B cell (primary cell): ENCODE measurements at regions of chr17 and their contacts with region 1.

Region 1: GRCh38 chr17:8138672-8139371 is 13.4 kb downstream of the PER1 start:
- DNase-seq: peak; percentile 98
- ATAC-seq: peak; percentile 96
- H3K4me3 ChIP-seq: peak overlapping the region; percentile 62 to 84 (median 72)
- H3K4me3 Mint-ChIP-seq: no peak overlapping the region
- H3K27ac ChIP-seq: peak overlapping the region; percentile 84 to 98
- H3K27ac Mint-ChIP-seq: no peak overlapping the region
- H3K4me1 ChIP-seq: peaks cover 10 to 20% of the 10 kb centered on the region in 2 donors
- H3K4me1 Mint-ChIP-seq: peaks cover 2% of the 10 kb centered on the region
- H3K27me3 ChIP-seq: no peaks in the 10 kb centered on the region
- H3K27me3 Mint-ChIP-seq: no peaks in the 10 kb centered on the region
- CTCF ChIP-seq: peak; percentile 94

Region 2: DNA sequence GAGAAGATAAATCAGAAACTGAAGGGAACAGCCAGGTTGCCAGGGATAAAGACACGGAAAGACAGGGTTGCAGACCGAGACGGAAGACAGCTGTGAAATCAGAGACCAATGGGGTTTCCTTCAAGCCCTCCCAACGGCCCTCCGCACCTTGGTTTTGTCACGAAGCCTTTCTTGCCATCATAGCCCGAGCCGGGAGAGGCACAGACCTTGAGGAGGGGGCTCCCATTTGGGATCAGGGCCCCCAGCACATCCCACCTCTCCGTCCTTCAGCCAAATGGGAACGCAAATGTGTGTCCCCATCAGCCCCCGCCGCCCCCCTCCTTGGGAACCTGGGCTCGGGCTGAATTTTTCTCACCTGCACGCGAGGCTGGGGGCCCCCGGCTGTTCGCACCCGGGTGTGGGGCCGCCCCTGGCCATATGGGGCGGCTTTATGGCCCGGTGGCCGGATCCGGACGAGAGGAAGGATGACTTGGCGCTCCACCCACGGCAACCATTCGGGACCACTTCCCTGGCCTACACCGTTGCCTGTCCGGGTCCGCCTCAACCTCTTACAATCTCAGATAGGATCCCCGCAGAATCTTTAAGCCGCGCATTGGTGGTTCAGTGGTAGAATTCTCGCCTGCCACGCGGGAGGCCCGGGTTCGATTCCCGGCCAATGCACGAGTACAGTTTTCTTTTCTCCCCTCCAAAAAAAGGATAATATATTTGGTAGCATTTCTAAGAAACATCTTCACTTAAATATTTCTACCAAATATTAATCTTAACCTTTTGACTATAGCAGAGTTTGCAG is 13.5 kb before region 1 on chr17:
- CTCF ChIA-PET with region 1: interaction called, 68 read pairs
- POLR2A ChIA-PET with region 1: interaction called, 14 read pairs
- intact Hi-C with region 1: loop called (anchors 1 kb)
- DNase-seq: peak; percentile 92
- ATAC-seq: peak; percentile 43
- H3K4me3 ChIP-seq: peak overlapping the region; percentile 70 to 85 (median 72)
- H3K4me3 Mint-ChIP-seq: peak overlapping the region; percentile 94
- H3K27ac ChIP-seq: no peak overlapping the region
- H3K27ac Mint-ChIP-seq: peak overlapping the region; percentile 94
- H3K4me1 ChIP-seq: peaks cover 54 to 64% of the 10 kb centered on the region in 2 donors
- H3K4me1 Mint-ChIP-seq: peaks cover 59% of the 10 kb centered on the region
- H3K27me3 ChIP-seq: peaks cover 0 to 50% (median 20%) of the 10 kb centered on the region in 4 experiments
- H3K27me3 Mint-ChIP-seq: peaks cover 34% of the 10 kb centered on the region
- CTCF ChIP-seq: no peak

Region 3: GRCh38 chr17:8156246-8156992 is 17.6 kb after region 1 on chr17:
- CTCF ChIA-PET with region 1: interaction called, 86 read pairs
- POLR2A ChIA-PET with region 1: interaction called, 36 read pairs
- intact Hi-C with region 1: loop called (anchors 1 kb)
- DNase-seq: peak; percentile 100
- ATAC-seq: peak; percentile 79
- H3K4me3 ChIP-seq: peak overlapping the region; percentile 69 to 96 (median 84)
- H3K4me3 Mint-ChIP-seq: no peak overlapping the region
- H3K27ac ChIP-seq: peak overlapping the region; percentile 98 to 100
- H3K27ac Mint-ChIP-seq: no peak overlapping the region
- H3K4me1 ChIP-seq: peaks cover 59 to 85% of the 10 kb centered on the region in 2 donors
- H3K4me1 Mint-ChIP-seq: peaks cover 50% of the 10 kb centered on the region
- H3K27me3 ChIP-seq: no peaks in the 10 kb centered on the region
- H3K27me3 Mint-ChIP-seq: no peaks in the 10 kb centered on the region
- CTCF ChIP-seq: no peak

Region 4: GRCh38 chr17:8189711-8190477 is 51.1 kb after region 1 on chr17 and contains the start of gene BORCS6:
- CTCF ChIA-PET with region 1: interaction called, 7 read pairs
- POLR2A ChIA-PET with region 1: interaction called, 6 read pairs
- intact Hi-C with region 1: loop called (anchors 1 kb)
- DNase-seq: peak; percentile 97
- ATAC-seq: peak; percentile 64
- H3K4me3 ChIP-seq: peak within 1 kb of the TSS; percentile 27 to 97 (median 74)
- H3K4me3 Mint-ChIP-seq: no peak within 1 kb of the TSS
- H3K27ac ChIP-seq: peak within 1 kb of the TSS; percentile 89 to 93
- H3K27ac Mint-ChIP-seq: no peak within 1 kb of the TSS
- H3K4me1 ChIP-seq: peaks cover 36 to 53% of the 10 kb centered on the region in 2 donors
- H3K4me1 Mint-ChIP-seq: peaks cover 11% of the 10 kb centered on the region
- H3K27me3 ChIP-seq: no peaks in the 10 kb centered on the region
- H3K27me3 Mint-ChIP-seq: no peaks in the 10 kb centered on the region
- CTCF ChIP-seq: no peak
- total RNA-seq, gene BORCS6: 18.6 and 20.2 TPM in 2 replicates

Region 5: DNA sequence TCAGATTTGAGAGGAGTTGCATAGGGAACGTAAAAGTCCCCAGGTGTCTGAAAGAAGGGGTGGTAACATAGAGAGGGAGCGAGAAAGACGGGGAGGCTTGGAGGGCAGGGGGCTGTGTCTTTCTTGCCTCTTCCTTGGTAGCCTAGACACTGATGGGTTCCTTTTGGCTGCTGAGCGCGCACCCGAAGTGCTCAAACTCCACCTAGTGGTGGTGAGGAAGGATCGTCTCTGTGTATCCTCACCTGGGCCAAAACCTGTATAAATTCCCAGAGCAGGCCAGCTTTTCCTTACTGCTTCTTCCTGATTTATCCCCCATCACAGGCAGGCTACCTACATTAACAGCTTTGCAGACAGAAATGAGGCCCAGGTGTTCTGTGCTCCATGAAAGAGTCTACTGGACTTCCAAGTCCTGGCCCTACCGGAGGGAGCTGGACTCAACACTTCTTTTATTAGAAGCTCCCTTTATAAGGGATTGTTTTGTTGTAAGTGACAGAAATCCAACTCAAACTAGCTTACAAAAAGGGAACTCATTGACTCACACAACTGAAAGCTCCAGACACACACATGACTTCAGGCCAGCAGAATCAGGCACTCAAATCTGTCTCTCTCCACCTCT is 161.9 kb after region 1 on chr17:
- CTCF ChIA-PET with region 1: interaction called, 20 read pairs
- POLR2A ChIA-PET with region 1: interaction called, 3 read pairs
- intact Hi-C with region 1: loop called (anchors 1 kb)
- DNase-seq: peak; percentile 84
- ATAC-seq: peak; percentile 95
- H3K4me3 ChIP-seq: no peak overlapping the region
- H3K4me3 Mint-ChIP-seq: no peak overlapping the region
- H3K27ac ChIP-seq: peak overlapping the region in 1 of 2 donors; percentile 1
- H3K27ac Mint-ChIP-seq: peak overlapping the region; percentile 7
- H3K4me1 ChIP-seq: peaks cover 3 to 4% of the 10 kb centered on the region in 2 donors
- H3K4me1 Mint-ChIP-seq: peaks cover 8% of the 10 kb centered on the region
- H3K27me3 ChIP-seq: no peaks in the 10 kb centered on the region
- H3K27me3 Mint-ChIP-seq: no peaks in the 10 kb centered on the region
- CTCF ChIP-seq: peak; percentile 81